Adrenal gland (tissue), 19 donors: ENCODE measurements at regions of chr1 and their contacts with region 1.

Region 1: DNA sequence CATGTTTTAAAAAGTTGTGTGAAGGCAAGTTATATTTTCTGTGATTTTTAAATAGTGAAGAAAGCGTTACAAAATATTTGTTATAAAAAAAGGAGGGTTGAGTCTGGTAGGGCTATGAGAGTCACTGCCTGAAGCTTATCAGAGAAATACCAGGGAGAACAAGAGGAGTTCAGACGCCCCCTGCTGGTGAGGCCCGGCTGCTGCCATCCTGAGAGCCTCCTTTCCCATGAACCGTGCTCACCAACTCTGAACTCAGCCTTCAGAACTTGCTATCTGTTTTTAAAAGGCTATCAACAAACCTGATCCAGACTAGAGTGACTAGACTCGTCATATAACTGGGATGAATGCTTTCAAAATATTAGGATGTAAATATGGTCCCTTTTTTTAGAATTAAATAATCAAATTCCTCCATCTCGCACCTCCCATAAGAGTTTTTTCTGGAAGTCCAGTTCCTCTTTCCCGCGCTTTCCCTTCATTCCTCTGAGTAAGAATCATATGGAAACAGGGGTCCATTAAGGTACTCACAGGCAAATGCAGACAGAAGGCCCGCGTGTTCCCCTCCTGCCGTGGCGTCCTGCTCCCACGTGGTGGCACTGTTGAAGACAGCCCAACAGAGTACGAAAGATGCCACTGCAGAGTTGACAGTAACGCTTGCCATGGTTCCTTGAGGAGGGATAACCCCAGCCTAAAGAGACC is 26.2 kb upstream of the SPATA6 start:
- DNase-seq: peak; percentile 79 to 96 (median 88)
- H3K4me3 ChIP-seq: no peak overlapping the region
- H3K27ac ChIP-seq: no peak overlapping the region
- H3K4me1 ChIP-seq: peaks cover 16 to 22% of the 10 kb centered on the region in 2 donors
- H3K27me3 ChIP-seq: no peaks in the 10 kb centered on the region
- CTCF ChIP-seq: peak; percentile 86 to 95 (median 90)
- POLR2A ChIP-seq: no peak

Region 2: DNA sequence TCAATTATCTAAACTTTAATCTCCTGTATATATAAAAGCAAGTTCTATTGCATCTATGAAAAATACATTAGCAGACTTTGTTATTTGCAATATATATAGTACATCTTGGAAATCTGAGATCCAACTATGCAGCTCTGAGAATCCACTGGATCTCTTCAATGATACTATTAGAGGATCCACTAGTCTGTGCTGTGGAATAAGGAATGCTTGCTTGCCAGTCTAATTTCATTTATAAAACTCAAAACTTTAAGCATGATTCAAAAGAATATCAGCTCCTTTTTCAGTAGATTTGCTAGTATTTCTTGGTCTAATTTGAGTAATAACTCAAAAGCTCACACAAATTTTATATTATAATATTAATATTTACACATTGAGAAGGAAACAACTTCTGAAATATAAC is 141.3 kb before region 1 on chr1:
- intact Hi-C with region 1: loop called in 1 of 2 experiments (anchors 10 kb)
- DNase-seq: no peak
- H3K4me3 ChIP-seq: no peak overlapping the region
- H3K27ac ChIP-seq: no peak overlapping the region
- H3K4me1 ChIP-seq: no peaks in the 10 kb centered on the region
- H3K27me3 ChIP-seq: no peaks in the 10 kb centered on the region
- CTCF ChIP-seq: peak in 5 of 6 experiments; percentile 14 to 40 (median 36)
- POLR2A ChIP-seq: no peak